ENCODE measurements at regions of chr20 and their contacts with region 1.

Region 1: DNA sequence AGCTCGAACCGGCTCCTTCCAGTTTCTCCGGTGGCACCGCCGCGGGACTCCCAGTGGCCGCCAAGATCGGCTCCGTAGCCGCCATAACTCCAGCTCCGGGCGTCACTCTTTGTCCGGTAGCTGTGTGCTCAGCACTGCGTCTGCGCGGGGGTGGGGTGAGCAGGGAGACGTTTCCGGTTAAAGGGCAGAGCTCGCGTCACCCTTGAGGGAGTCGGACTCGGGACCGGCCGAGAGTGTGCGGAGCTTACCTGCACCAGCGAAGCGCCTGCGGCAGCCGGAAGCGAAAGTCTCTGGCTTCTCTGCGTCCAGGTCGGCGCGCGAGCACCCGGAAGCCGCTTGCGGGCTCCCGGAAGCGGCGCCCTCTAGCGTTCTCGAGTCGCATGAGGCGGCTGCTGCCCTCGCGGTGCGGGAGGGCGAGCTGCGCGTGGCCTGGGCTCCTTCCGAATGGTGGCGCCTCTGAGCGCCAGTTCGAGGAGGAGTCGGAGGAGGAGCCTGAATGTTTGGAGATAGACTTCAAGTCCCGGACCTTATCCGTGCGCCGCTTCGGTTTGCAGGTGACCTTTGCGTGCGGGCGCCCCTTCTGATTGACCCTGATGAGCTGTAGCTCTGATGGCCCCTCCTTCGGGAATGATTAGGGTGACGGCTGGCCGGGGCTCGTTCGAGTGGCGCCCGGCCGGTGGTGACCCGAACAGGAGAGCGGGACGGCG is at the start of gene SCAND1:
- DNase-seq: peak; percentile 97
- H3K4me3 Mint-ChIP-seq: peak within 1 kb of the TSS; percentile 100
- H3K27ac Mint-ChIP-seq: peak within 1 kb of the TSS; percentile 100
- H3K4me1 Mint-ChIP-seq: peaks cover 13% of the 10 kb centered on the region
- H3K27me3 Mint-ChIP-seq: no peaks in the 10 kb centered on the region
- total RNA-seq, gene SCAND1: 39.5 and 40.3 TPM in 2 replicates

Region 2: GRCh38 chr20:35601008-35601973 is 353.1 kb before region 1 on chr20:
- intact Hi-C with region 1: loop called (anchors 5 kb)
- DNase-seq: peak; percentile 74
- H3K4me3 Mint-ChIP-seq: peak overlapping the region; percentile 71
- H3K27ac Mint-ChIP-seq: no peak overlapping the region
- H3K4me1 Mint-ChIP-seq: peaks cover 10% of the 10 kb centered on the region
- H3K27me3 Mint-ChIP-seq: peaks cover 52% of the 10 kb centered on the region

Region 3: GRCh38 chr20:35664544-35665221 is 289.7 kb before region 1 on chr20 and contains the starts of genes CPNE1 and RBM12:
- intact Hi-C with region 1: loop called (anchors 2 kb)
- DNase-seq: peak; percentile 93
- H3K4me3 Mint-ChIP-seq: peak within 1 kb of the TSS; percentile 95
- H3K27ac Mint-ChIP-seq: peak within 1 kb of the TSS; percentile 99
- H3K4me1 Mint-ChIP-seq: peaks cover 41% of the 10 kb centered on the region
- H3K27me3 Mint-ChIP-seq: no peaks in the 10 kb centered on the region
- total RNA-seq, gene CPNE1: 342 and 347 TPM in 2 replicates
- total RNA-seq, gene RBM12: 147 and 148 TPM in 2 replicates

Region 4: DNA sequence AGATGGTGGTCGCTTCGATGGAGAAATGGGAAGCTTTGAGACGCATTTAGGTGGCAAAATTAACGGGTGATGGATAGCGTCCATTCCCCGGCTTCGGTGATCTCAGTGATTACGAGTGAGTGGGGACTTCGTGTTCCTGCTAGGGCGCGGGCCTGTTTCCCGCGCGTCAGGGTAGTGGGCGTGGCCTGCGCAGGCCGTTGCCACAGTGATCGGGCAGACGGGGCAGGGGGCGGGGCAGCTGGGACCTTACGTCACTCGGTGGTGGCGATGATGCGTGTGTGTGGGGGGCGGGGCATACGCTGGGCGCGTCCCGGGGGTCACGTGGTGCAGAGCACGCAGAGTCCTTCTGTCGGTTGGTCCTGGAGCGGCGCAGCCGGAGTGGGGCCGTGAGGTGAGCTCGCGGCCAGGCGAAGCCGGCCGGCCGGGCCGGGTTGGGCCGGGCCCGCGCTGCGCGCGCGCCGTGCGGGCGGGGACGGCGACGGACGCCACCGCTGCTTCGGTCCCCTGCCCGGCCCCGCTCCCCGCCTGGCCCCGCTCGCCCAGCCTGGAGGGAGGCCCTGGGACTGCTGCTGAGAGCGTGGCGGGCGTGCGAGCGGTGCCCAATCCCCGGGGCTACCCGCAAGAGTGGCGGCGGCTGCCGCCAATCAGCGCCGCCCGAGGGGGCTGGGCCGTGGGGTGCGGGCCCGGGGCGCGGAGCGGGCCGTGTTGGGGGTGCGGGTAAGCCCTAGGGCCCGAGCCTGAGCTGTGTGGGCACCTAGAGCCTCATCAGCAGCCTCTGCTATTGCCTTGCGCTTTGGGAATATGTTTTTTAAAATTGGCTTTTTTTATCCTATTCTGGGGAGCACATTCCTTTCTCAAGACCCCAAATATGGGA is 182.4 kb before region 1 on chr20 and contains the start of gene PHF20:
- intact Hi-C with region 1: loop called (anchors 5 kb)
- DNase-seq: peak; percentile 98
- H3K4me3 Mint-ChIP-seq: peak within 1 kb of the TSS; percentile 88
- H3K27ac Mint-ChIP-seq: peak within 1 kb of the TSS; percentile 87
- H3K4me1 Mint-ChIP-seq: peaks cover 46% of the 10 kb centered on the region
- H3K27me3 Mint-ChIP-seq: no peaks in the 10 kb centered on the region
- total RNA-seq, gene PHF20: 55.1 and 64.3 TPM in 2 replicates

Region 5: DNA sequence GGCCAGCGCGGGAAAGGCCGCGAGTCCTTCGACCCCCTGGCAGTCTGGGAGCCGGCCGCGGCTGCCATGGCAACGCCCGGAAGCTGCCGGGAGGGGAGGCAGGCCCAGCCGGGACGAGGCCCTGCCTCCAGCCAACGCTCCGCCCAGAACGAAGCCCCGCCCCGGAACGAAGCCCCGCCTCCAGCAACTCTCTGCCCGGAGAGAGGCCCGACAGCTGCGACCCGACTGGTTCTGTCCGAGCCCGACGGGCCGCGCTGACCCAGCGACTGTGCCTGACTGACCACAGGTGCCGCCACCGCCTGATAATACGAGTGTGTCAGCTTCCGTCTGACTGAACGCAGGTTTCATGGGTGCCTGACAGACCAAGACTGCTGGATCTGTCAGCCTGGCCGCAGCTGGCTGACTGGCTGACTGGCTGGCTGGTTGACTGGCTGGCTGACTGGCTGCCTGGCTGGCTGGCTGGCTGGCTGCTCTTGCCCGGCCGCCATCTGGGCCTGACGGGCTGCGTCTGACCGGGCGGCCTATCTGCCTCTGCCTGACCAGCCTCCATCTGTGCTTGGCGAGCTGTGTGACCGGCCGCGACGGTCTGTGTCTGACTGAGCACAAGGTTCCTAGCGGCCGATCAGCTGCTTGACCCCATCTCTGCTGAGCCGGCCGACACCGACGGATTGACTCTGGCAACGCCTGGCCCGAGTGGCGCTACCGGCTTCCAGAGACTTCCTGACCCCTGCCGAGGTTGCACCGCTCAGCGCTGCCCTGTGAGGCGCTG is 110.5 kb after region 1 on chr20:
- intact Hi-C with region 1: loop called (anchors 5 kb)
- DNase-seq: peak; percentile 85
- H3K4me3 Mint-ChIP-seq: peak overlapping the region; percentile 79
- H3K27ac Mint-ChIP-seq: no peak overlapping the region
- H3K4me1 Mint-ChIP-seq: peaks cover 10% of the 10 kb centered on the region
- H3K27me3 Mint-ChIP-seq: peaks cover 32% of the 10 kb centered on the region